Activated CD4-positive, alpha-beta T cell treated with anti-CD3 and anti-CD28 coated beads for 36 hours (primary cell): ENCODE measurements at regions of chr1 and their contacts with region 1.

Region 1: GRCh38 chr1:36703526-36704208 is 221.0 kb upstream of the CSF3R start:
- DNase-seq: peak; percentile 86
- ATAC-seq: peak; percentile 88
- H3K4me3 Mint-ChIP-seq: no peak overlapping the region
- H3K27ac Mint-ChIP-seq: no peak overlapping the region
- H3K4me1 Mint-ChIP-seq: no peaks in the 10 kb centered on the region
- H3K27me3 Mint-ChIP-seq: peaks cover 10% of the 10 kb centered on the region

Region 2: GRCh38 chr1:36099681-36100341 is 603.9 kb before region 1 on chr1:
- CTCF ChIA-PET with region 1: no interaction called
- POLR2A ChIA-PET with region 1: no interaction called
- intact Hi-C with region 1: no loop called
- DNase-seq: peak; percentile 87
- ATAC-seq: peak; percentile 95
- H3K4me3 Mint-ChIP-seq: no peak overlapping the region
- H3K27ac Mint-ChIP-seq: peak overlapping the region; percentile 10
- H3K4me1 Mint-ChIP-seq: no peaks in the 10 kb centered on the region
- H3K27me3 Mint-ChIP-seq: no peaks in the 10 kb centered on the region

Region 3: GRCh38 chr1:37020653-37021277 is 317.1 kb after region 1 on chr1:
- CTCF ChIA-PET with region 1: no interaction called
- POLR2A ChIA-PET with region 1: no interaction called
- intact Hi-C with region 1: loop called in 1 of 2 experiments (anchors 10 kb)
- DNase-seq: peak; percentile 51
- ATAC-seq: no peak
- H3K4me3 Mint-ChIP-seq: no peak overlapping the region
- H3K27ac Mint-ChIP-seq: no peak overlapping the region
- H3K4me1 Mint-ChIP-seq: no peaks in the 10 kb centered on the region
- H3K27me3 Mint-ChIP-seq: peaks cover 16% of the 10 kb centered on the region

Region 4: GRCh38 chr1:37177247-37177864 is 473.7 kb after region 1 on chr1:
- CTCF ChIA-PET with region 1: interaction called, 3 read pairs
- POLR2A ChIA-PET with region 1: no interaction called
- intact Hi-C with region 1: loop called in 1 of 2 experiments (anchors 10 kb)
- DNase-seq: peak; percentile 52
- ATAC-seq: no peak
- H3K4me3 Mint-ChIP-seq: no peak overlapping the region
- H3K27ac Mint-ChIP-seq: no peak overlapping the region
- H3K4me1 Mint-ChIP-seq: no peaks in the 10 kb centered on the region
- H3K27me3 Mint-ChIP-seq: peaks cover 34% of the 10 kb centered on the region

Region 5: DNA sequence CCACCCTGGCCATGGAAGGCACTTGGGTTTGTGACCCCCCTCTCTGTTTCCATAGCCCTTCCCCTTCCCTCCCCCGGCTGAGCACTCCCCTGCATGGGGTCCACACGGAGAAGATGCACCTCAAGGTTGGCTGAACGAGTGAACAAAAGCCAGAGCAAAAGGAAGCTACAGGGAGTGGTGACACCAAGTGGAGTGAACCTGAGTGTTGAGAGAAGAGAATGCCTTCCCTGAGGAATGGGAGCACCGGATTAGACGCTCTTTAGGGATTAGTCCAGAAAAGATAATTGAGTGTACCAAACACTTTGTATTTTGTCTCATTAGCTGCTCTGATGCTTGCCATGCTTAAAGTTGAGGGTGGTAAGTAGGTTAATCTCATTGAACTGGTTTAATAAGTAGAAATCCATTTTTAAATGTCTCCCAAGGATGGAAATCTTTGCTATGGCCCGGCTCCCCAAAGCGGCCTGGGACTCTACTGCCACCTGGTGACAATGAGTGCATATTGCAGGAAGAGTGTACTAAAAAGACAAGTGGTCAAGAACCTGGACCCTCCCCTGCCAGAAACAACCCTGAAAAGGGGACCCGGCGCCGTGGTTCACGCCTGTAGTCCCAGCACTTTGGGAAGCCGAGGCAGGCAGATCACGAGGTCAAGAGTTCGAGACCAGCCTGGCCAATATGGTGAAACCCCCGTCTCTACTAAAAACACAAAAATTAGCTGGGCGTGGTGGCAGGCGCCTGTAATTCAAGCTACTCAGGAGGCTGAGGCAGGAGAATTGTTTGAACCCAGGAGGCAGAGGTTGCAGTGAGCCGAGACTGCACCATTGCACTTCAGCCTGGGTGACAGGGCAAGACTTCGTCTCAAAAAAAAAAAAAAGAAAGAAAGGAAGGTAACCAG is 620.1 kb after region 1 on chr1:
- CTCF ChIA-PET with region 1: no interaction called
- POLR2A ChIA-PET with region 1: no interaction called
- intact Hi-C with region 1: loop called (anchors 1 to 5 kb)
- DNase-seq: peak; percentile 62
- ATAC-seq: no peak
- H3K4me3 Mint-ChIP-seq: no peak overlapping the region
- H3K27ac Mint-ChIP-seq: no peak overlapping the region
- H3K4me1 Mint-ChIP-seq: no peaks in the 10 kb centered on the region
- H3K27me3 Mint-ChIP-seq: peaks cover 32% of the 10 kb centered on the region

Region 6: DNA sequence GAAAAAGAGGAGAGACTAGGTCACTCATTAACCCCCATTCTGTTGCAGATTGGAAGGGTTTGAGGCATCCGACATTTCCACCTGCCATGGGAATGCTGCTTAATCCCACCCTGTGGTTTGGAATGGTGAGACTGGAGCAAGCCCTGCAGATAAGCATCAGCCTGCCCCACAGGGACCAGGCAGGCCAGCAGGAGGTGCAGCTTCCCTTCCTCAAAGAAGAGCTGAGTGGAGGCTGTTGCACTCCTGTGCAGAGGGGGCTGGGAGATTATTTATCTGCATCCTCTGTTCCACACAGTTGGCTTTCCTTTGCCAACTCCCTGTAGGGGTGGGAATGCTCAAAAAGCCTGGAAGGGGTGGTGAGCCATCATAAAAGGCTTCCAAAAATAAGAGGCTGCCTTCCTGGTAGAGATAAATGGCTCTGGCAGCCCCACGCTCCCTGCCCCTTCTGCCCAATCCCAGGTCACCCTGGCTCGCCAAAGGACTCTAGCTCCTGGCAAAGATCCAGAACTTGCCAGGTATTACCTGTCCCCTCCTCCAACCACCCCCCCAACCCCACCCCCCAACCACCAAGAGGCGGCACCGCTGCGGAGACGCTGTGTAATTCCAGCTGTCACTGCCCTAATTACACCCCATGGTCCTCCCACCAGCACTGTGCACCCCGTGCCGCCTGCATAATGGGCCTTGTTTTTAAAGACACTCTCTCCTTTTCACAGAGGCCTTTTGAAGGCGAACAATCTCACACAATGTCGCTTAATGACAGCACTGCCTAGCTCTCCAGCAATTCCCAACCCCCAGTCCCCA is 687.7 kb after region 1 on chr1:
- CTCF ChIA-PET with region 1: no interaction called
- POLR2A ChIA-PET with region 1: no interaction called
- intact Hi-C with region 1: no loop called
- DNase-seq: no peak
- ATAC-seq: no peak
- H3K4me3 Mint-ChIP-seq: no peak overlapping the region
- H3K27ac Mint-ChIP-seq: no peak overlapping the region
- H3K4me1 Mint-ChIP-seq: no peaks in the 10 kb centered on the region
- H3K27me3 Mint-ChIP-seq: peaks cover 13% of the 10 kb centered on the region

Region 7: GRCh38 chr1:37434292-37434907 is 730.7 kb after region 1 on chr1:
- CTCF ChIA-PET with region 1: no interaction called
- POLR2A ChIA-PET with region 1: no interaction called
- intact Hi-C with region 1: loop called (anchors 1 to 5 kb)
- DNase-seq: peak; percentile 88
- ATAC-seq: peak; percentile 97
- H3K4me3 Mint-ChIP-seq: no peak overlapping the region
- H3K27ac Mint-ChIP-seq: no peak overlapping the region
- H3K4me1 Mint-ChIP-seq: no peaks in the 10 kb centered on the region
- H3K27me3 Mint-ChIP-seq: peaks cover 5% of the 10 kb centered on the region